ENCODE measurements at regions of chr22 and their contacts with region 1.

Region 1: GRCh38 chr22:25777870-25778269 is 35.9 kb downstream of the MYO18B start:
- DNase-seq: no peak
- ATAC-seq: no peak
- H3K4me3 Mint-ChIP-seq: no peak overlapping the region
- H3K27ac Mint-ChIP-seq: no peak overlapping the region
- H3K4me1 Mint-ChIP-seq: no peaks in the 10 kb centered on the region; the same call in 1 of the 2 replicates
- H3K27me3 Mint-ChIP-seq: no peaks in the 10 kb centered on the region; the same call in 1 of the 2 replicates
- CTCF ChIP-seq: no peak

Region 2: DNA sequence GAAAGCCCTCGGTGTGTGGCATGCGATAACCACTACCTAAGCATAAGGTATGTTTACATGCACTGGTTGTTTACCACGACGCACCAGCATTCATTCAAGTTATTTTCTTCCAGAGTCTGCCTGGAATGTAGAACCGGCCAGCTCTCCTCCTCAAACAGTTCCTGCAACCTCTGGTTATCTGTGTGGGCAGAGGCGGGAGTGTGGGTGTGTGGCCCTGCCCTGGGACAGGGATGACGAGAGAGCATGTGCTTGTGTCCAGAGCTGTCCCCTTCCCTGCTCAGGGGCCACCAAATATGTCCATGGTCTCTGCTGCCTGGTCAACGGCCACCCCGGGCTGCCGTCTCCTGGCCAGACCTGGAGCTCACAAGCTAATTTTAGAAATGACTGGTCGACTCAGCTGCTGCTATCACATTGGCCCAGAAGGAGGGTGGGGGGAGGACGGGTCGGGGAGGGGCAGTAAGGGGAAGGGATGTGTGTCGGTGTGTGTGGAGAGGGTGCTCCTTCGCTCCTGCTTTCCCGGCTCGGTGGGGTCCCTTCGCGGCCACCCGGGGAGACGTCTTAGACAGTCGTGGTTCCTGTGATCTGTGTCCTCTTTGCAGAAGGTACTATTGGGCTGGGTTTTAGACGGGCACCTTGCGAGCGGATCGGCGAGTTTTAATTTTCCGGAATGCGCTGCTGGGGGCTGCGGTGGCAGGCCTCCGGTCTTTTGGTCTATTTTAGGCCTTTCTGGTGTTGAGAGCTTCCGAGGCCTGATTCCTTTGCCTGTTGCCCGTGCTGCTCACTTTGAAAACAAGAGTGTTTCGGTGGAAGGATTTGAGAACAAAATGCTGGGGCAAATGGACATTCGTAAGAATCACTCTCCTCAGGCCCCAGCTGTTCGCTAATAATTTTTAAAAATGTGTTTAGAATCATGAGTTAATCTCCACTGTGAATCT is 35.9 kb before region 1 on chr22 and contains the start of gene MYO18B:
- CTCF ChIA-PET with region 1: interaction called, 10 read pairs
- POLR2A ChIA-PET with region 1: no interaction called
- DNase-seq: no peak
- ATAC-seq: no peak
- H3K4me3 Mint-ChIP-seq: no peak within 1 kb of the TSS
- H3K27ac Mint-ChIP-seq: no peak within 1 kb of the TSS
- H3K4me1 Mint-ChIP-seq: peaks cover 3% of the 10 kb centered on the region; the same call in 1 of the 2 replicates
- H3K27me3 Mint-ChIP-seq: no peaks in the 10 kb centered on the region
- CTCF ChIP-seq: no peak
- total RNA-seq, gene MYO18B: 0.55 to 1.4 TPM (median 0.96 TPM) in 3 replicates

Region 3: GRCh38 chr22:26199667-26200066 is 421.8 kb after region 1 on chr22:
- CTCF ChIA-PET with region 1: no interaction called
- POLR2A ChIA-PET with region 1: no interaction called
- DNase-seq: no peak
- ATAC-seq: peak; percentile 70; the same call in 1 of the 2 replicates
- H3K4me3 Mint-ChIP-seq: no peak overlapping the region
- H3K27ac Mint-ChIP-seq: no peak overlapping the region
- H3K4me1 Mint-ChIP-seq: peaks cover 6% of the 10 kb centered on the region
- H3K27me3 Mint-ChIP-seq: no peaks in the 10 kb centered on the region; the same call in 1 of the 2 replicates
- CTCF ChIP-seq: no peak

Measured in WTC11 (cell line).